HEK293 (cell line): ENCODE measurements at regions of chr17 and their contacts with region 1.

Region 1: DNA sequence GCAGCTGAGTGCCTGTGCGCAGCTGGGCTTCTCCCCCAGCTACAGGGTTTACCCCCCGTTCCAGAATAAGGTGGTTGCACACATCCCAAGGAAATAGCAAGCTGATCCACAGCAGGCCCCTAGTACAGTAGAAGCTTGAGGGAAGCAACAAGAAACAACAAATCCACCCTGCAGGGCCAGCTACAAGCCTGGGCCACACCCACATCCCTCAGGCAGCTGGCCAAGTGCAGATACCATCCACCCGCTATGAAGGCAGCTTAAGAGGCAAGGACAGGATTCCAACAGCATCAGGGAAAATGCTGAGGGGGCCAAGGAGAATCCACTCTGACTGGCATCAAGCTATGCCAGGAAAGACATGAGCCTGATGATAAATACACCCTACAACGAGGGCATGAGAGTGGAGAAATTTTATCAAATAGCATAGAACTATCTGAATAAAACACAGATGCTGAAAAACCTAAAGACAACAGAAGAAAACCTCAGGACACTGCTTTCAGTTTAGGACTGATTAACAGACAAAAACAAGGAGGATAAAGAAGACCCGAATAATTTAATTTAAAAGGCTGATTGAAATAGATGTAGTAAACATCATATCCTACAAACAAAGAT is 67.0 kb upstream of the RCVRN start:
- H3K4me3 ChIP-seq: no peak overlapping the region
- H3K27ac ChIP-seq: peak overlapping the region; percentile 60
- H3K4me1 ChIP-seq: peaks cover 25% of the 10 kb centered on the region
- CTCF ChIP-seq: no peak

Region 2: DNA sequence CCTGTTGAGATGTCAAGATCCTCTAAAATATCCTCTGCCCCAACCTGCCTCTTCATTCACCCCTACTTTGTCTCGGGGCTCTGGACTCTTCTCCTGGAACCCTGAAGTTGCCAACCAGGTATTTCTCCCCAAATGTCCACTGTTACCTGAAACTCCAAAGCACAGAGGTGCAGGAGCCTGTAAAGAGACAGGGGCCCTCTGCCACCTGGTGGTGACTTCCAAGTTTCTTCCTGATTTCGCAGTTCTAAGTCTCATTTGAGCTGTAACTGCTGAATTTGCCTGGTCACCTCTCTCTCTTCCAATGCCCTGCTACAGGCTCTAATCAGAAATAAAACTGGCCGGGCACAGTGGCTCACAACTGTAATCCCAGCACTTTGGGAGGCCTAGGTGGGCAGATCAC is 10.1 kb after region 1 on chr17:
- CTCF ChIA-PET with region 1: interaction called, 135 read pairs
- POLR2A ChIA-PET with region 1: interaction called, 3 read pairs
- H3K4me3 ChIP-seq: no peak overlapping the region
- H3K27ac ChIP-seq: no peak overlapping the region
- H3K4me1 ChIP-seq: no peaks in the 10 kb centered on the region; the same call in 1 of the 2 replicates
- CTCF ChIP-seq: peak; percentile 50; the same call in 1 of the 2 replicates

Region 3: GRCh38 chr17:9987779-9988574 is 15.9 kb after region 1 on chr17:
- CTCF ChIA-PET with region 1: interaction called, 135 read pairs
- POLR2A ChIA-PET with region 1: interaction called, 3 read pairs
- H3K4me3 ChIP-seq: no peak overlapping the region
- H3K27ac ChIP-seq: no peak overlapping the region
- H3K4me1 ChIP-seq: no peaks in the 10 kb centered on the region
- CTCF ChIP-seq: peak; percentile 59

Region 4: DNA sequence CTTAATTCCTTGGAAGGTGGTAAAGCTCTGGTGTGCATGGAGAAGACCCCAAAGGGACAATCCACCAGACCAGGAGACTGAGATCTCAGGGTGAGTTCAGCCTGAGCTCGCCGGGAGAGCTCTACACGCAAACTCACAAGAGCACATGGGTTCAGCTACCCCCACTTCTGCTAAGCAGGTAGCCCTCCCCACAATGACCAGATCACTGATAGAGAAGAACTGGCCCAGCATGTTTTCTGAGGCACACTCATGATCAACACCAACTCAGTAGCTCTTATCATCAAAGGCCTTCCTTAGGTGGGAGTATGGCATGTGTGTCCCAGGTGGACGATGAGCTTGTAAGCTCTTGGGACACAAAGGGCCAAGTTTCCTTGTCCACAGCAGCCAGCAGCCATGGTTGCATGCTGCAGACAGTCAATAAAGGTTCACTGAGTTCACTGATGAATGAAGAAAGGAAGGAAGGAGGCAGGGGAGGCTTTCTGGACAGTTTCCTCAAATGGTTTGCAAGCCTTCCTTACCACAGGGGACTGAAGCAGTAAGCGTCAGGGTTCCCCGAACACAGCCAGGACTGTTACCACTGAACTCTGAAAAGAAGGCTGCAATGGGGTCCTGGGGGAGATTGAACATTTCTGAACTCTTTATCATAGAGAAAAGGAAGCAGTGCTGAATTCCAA is 115.1 kb after region 1 on chr17:
- CTCF ChIA-PET with region 1: no interaction called
- POLR2A ChIA-PET with region 1: no interaction called
- H3K4me3 ChIP-seq: no peak overlapping the region
- H3K27ac ChIP-seq: no peak overlapping the region
- H3K4me1 ChIP-seq: peaks cover 5% of the 10 kb centered on the region; the same call in 1 of the 2 replicates
- CTCF ChIP-seq: no peak